A549 (cell line): ENCODE measurements at regions of chr3 and their contacts with region 1.

Region 1: DNA sequence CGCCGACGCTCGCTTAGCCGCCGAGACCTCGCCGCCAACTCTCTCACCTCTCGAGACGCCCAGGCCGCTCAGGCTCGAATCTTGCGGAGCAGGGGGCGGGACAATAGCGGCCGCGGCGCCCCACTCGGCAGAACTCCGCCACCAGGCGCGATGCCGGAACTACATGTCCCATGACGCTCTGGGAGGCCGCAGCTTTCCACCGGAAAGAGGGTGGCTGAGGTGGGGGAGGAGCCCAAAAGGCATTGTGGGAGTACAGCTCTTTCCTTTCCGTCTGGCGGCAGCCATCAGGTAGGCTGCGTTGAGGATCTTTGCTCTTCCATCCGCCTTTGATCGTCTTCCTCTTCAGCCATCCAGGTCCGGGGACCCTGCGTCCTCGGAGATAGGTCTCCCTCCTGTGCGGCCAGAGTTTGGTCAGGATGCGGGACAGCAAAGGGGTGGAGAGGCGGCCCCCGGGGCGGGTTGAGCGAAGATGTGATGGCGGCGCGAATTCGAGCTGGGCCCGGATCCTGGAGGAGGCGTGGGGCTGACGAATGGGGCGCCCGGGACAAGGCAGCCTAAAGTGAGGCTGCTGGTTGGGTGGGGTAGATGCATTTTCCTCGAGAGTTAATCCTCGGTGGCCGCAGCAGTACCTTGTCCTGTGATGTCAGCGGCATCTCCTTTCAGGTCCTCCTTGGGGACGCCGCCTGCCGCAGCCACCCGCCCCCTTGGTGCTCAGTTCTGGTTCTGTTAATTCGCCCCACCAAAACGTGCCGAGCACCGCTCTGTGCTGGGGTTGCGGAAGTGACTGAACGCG is at the starts of genes NKIRAS1 and RPL15:
- DNase-seq: peak; percentile 94 to 97
- ATAC-seq: peak; percentile 94 to 95
- H3K4me3 ChIP-seq: peak within 1 kb of the TSS; percentile 91
- H3K27ac ChIP-seq: peak within 1 kb of the TSS; percentile 97 to 99
- H3K4me1 ChIP-seq: peaks cover 46% of the 10 kb centered on the region
- CTCF ChIP-seq: no peak
- EP300 ChIP-seq: no peak; a peak in 1 of 5 replicates
- POLR2A ChIP-seq: peak; percentile 99
- RAD21 ChIP-seq: peak in 1 of 2 experiments; percentile 5; a peak in 1 of 5 replicates
- polyA plus RNA-seq, gene NKIRAS1: 12.2 and 16.8 TPM in 2 replicates
- polyA plus RNA-seq, gene RPL15: 2,933 and 3,149 TPM in 2 replicates

Region 2: DNA sequence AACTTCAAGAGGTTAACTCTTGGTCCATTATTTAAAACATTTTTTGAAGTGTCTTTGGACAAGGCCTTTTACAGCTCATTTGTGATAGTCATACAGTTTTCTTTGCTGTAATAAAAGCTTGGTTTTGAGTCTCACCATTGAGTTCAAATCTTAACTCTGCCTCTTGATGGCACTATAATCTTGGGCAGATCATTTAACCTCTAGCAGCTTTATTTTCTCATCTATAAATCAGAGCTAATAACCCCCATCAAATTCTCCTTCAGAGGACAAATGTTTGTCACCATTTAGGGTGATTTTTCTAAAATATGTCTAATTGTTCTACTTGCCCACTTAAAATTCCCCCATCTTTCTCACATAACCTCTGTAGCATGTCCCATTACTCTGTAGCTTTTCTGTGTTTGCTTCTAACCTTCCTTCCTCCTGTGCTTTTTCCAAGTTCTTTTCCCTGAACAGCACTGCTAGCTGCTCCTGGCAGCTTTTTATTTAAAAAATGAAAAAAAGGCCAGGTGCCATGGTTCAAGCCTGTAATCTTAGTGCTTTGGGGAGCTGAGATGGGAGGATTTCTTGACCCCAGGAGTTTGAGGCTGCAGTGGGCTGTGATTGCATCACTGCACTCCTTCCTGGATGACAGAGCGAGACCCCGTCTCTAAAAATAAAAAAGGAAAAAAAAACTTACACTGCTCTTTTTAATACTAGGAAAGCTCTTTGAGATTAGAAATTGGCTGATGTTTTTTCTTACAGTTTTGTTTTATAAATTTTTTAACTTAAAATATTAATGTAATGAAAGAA is 82.8 kb before region 1 on chr3:
- CTCF ChIA-PET with region 1: no interaction called
- POLR2A ChIA-PET with region 1: interaction called, 13 read pairs
- DNase-seq: no peak
- ATAC-seq: peak in 1 of 2 experiments; percentile 65; a peak in 3 of 6 replicates
- H3K4me3 ChIP-seq: no peak overlapping the region
- H3K27ac ChIP-seq: no peak overlapping the region
- H3K4me1 ChIP-seq: peaks cover 10% of the 10 kb centered on the region; the same call in 2 of the 3 replicates
- CTCF ChIP-seq: peak; percentile 40
- EP300 ChIP-seq: no peak
- POLR2A ChIP-seq: no peak
- RAD21 ChIP-seq: peak; percentile 40 to 41; a peak in 3 of 5 replicates

Region 3: DNA sequence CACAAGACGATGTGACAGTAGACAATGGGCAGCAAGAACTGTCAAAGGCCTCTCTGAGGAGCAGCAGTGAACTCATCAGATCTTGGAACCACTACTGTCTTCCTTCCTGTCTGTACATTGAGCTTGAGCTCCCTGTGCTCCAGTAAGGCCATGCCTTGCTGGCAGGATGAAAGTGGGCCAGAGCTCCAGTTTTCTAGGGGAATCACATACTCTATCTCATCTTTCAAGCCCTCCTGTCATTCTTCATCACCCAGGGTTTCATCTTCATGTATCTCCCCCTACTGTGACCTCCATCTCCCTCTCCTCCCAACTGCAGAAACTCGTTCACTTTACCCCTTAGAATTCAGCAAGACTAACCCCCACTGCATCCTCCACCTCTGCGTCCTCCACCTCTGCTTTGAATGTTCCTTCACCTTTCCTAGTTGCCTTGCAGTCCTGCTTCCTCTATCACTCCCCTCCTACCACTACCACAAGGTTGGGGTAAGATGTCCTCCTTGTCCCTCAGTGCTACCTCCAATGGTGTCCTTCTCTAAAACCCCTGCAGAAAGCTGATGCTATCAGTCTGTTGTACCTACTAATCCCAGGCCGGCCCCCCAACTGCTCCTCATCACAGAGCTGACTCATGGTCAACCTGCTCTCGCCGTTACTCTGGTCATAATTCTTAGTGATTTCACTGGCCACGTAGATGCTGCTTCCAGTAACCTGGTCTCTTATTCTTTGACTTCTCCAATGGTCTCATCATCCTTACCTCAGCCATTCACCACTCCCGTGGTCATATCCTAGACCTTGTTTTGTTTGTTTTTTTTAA is 22.6 kb before region 1 on chr3:
- CTCF ChIA-PET with region 1: interaction called, 7 read pairs
- POLR2A ChIA-PET with region 1: interaction called, 19 read pairs
- DNase-seq: no peak
- ATAC-seq: peak; percentile 45 to 65
- H3K4me3 ChIP-seq: no peak overlapping the region
- H3K27ac ChIP-seq: no peak overlapping the region
- H3K4me1 ChIP-seq: peaks cover 2% of the 10 kb centered on the region; the same call in 2 of the 3 replicates
- CTCF ChIP-seq: no peak
- EP300 ChIP-seq: no peak
- POLR2A ChIP-seq: no peak
- RAD21 ChIP-seq: no peak

Region 4: DNA sequence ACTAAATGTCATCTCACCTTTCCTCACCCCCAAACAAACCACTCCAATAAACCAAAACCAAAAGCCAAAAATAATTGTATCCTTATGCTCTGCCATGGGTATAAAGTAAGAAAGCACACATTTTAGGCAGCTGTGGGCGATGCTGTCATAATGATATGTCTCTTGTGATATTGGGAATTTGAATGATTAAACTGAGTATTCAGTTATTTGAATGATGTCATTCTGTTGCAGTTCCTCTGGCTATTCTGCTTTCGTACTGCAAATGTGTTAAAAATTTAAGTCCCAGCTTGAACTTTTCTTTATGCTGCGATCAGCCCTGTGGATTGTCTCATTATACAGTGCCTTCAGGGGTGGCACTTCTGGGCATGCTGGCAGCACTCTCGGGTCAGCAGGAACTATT is 17.2 kb after region 1 on chr3:
- CTCF ChIA-PET with region 1: no interaction called
- POLR2A ChIA-PET with region 1: interaction called, 21 read pairs
- DNase-seq: no peak
- ATAC-seq: no peak
- H3K4me3 ChIP-seq: no peak overlapping the region
- H3K27ac ChIP-seq: no peak overlapping the region
- H3K4me1 ChIP-seq: no peaks in the 10 kb centered on the region
- CTCF ChIP-seq: no peak
- EP300 ChIP-seq: no peak
- POLR2A ChIP-seq: no peak
- RAD21 ChIP-seq: no peak

Region 5: GRCh38 chr3:23945903-23946751 is 29.0 kb after region 1 on chr3:
- CTCF ChIA-PET with region 1: no interaction called
- POLR2A ChIA-PET with region 1: interaction called, 51 read pairs
- DNase-seq: peak; percentile 91 to 97
- ATAC-seq: peak; percentile 74 to 85
- H3K4me3 ChIP-seq: peak overlapping the region; percentile 72
- H3K27ac ChIP-seq: peak overlapping the region; percentile 79 to 91
- H3K4me1 ChIP-seq: peaks cover 35% of the 10 kb centered on the region
- CTCF ChIP-seq: no peak
- EP300 ChIP-seq: no peak
- POLR2A ChIP-seq: no peak
- RAD21 ChIP-seq: no peak

Region 6: GRCh38 chr3:24086617-24087404 is 169.7 kb after region 1 on chr3:
- CTCF ChIA-PET with region 1: no interaction called
- POLR2A ChIA-PET with region 1: no interaction called
- DNase-seq: no peak
- ATAC-seq: peak in 1 of 2 experiments; percentile 61; a peak in 3 of 6 replicates
- H3K4me3 ChIP-seq: 0 out of 3 replicates have a peak overlapping the region, but pooled peaks have one; percentile 2
- H3K27ac ChIP-seq: peak overlapping the region; percentile 39 to 67; a peak in 5 of 6 replicates
- H3K4me1 ChIP-seq: peaks cover 16% of the 10 kb centered on the region
- CTCF ChIP-seq: no peak
- EP300 ChIP-seq: no peak
- POLR2A ChIP-seq: no peak
- RAD21 ChIP-seq: no peak